ENCODE measurements at regions of chr2 and their contacts with region 1.

Region 1: GRCh38 chr2:96856776-96857673 is 791 bp downstream of the ANKRD39 start:
- DNase-seq: peak in 2 of 5 donors; percentile 18 to 38
- H3K4me3 ChIP-seq: peak overlapping the region; percentile 92
- H3K4me3 Mint-ChIP-seq: peak overlapping the region; percentile 79 to 94 (median 92)
- H3K27ac ChIP-seq: peak overlapping the region; percentile 58
- H3K27ac Mint-ChIP-seq: peak overlapping the region; percentile 8 to 92 (median 87)
- H3K4me1 ChIP-seq: peaks cover 32% of the 10 kb centered on the region
- H3K4me1 Mint-ChIP-seq: peaks cover 27 to 61% (median 51%) of the 10 kb centered on the region in 3 donors
- H3K27me3 ChIP-seq: no peaks in the 10 kb centered on the region
- H3K27me3 Mint-ChIP-seq: no peaks in the 10 kb centered on the region

Region 2: DNA sequence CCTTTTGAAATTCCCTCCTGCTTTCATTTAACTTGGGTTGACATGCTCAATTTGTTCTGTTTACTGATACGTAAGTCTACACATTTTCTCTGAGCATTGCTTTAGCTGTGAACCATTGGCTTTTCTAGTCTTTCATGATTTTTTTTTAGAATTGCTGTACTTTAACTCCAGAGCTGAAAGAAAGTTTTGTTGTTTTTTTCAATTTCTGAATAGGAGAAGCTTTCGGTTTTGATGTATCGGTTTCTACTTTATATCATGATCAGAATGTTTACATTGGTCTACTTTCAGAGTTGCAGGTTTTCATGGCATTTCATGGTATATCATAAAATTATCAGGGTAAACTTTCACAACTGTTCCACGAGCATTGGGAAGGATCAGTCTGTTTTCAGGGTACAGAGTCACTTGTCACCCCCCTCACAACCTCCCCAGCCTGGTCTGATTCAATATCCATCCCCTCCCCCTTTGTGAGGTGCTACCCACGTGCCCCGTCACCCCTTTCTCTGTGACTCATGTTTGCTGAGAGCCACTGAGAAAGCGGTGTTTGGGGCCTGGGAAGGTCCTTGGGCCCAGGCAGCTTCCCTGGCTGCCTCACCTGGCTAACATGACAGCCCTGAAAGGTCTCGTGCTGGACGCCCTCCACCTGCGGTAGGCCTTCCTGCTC is 725.7 kb before region 1 on chr2:
- CTCF ChIA-PET with region 1: no interaction called
- POLR2A ChIA-PET with region 1: no interaction called
- DNase-seq: peak in 2 of 5 donors; percentile 40 to 66
- H3K4me3 ChIP-seq: no peak overlapping the region
- H3K4me3 Mint-ChIP-seq: peak overlapping the region in 4 of 7 donors; percentile 6 to 64 (median 43)
- H3K27ac ChIP-seq: no peak overlapping the region
- H3K27ac Mint-ChIP-seq: peak overlapping the region; percentile 62 to 93 (median 76)
- H3K4me1 ChIP-seq: no peaks in the 10 kb centered on the region
- H3K4me1 Mint-ChIP-seq: peaks cover 16 to 52% (median 22%) of the 10 kb centered on the region in 3 donors
- H3K27me3 ChIP-seq: no peaks in the 10 kb centered on the region
- H3K27me3 Mint-ChIP-seq: peaks cover 0 to 3% of the 10 kb centered on the region in 2 donors

Region 3: DNA sequence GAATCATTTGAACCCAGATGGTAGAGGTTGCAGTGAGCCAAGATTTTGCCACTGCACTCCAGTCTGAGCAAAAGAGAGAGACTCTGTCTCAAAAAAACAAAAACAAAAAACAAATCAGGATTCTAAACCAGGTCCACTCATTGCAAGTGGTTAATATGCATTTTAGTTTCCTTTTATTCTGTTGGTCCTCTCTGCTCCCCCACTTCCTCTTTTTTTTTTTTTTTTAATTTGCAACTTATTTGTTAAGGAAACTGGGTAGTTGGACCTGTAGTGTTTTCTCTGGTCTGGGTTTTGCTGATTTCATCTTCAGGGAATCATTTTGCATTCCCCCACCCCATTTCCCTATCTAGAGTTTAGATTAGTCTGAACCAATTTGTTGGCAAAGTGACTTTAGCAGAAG is 200.5 kb before region 1 on chr2:
- CTCF ChIA-PET with region 1: no interaction called
- POLR2A ChIA-PET with region 1: no interaction called
- DNase-seq: no peak
- H3K4me3 ChIP-seq: no peak overlapping the region
- H3K4me3 Mint-ChIP-seq: no peak overlapping the region
- H3K27ac ChIP-seq: no peak overlapping the region
- H3K27ac Mint-ChIP-seq: no peak overlapping the region
- H3K4me1 ChIP-seq: no peaks in the 10 kb centered on the region
- H3K4me1 Mint-ChIP-seq: no peaks in the 10 kb centered on the region
- H3K27me3 ChIP-seq: no peaks in the 10 kb centered on the region
- H3K27me3 Mint-ChIP-seq: no peaks in the 10 kb centered on the region

Region 4: GRCh38 chr2:96669665-96670091 is 187.3 kb before region 1 on chr2:
- CTCF ChIA-PET with region 1: no interaction called
- POLR2A ChIA-PET with region 1: no interaction called
- DNase-seq: no peak
- H3K4me3 ChIP-seq: no peak overlapping the region
- H3K4me3 Mint-ChIP-seq: no peak overlapping the region
- H3K27ac ChIP-seq: no peak overlapping the region
- H3K27ac Mint-ChIP-seq: no peak overlapping the region
- H3K4me1 ChIP-seq: no peaks in the 10 kb centered on the region
- H3K4me1 Mint-ChIP-seq: no peaks in the 10 kb centered on the region
- H3K27me3 ChIP-seq: no peaks in the 10 kb centered on the region
- H3K27me3 Mint-ChIP-seq: peaks cover 0 to 4% of the 10 kb centered on the region in 2 donors

Region 5: DNA sequence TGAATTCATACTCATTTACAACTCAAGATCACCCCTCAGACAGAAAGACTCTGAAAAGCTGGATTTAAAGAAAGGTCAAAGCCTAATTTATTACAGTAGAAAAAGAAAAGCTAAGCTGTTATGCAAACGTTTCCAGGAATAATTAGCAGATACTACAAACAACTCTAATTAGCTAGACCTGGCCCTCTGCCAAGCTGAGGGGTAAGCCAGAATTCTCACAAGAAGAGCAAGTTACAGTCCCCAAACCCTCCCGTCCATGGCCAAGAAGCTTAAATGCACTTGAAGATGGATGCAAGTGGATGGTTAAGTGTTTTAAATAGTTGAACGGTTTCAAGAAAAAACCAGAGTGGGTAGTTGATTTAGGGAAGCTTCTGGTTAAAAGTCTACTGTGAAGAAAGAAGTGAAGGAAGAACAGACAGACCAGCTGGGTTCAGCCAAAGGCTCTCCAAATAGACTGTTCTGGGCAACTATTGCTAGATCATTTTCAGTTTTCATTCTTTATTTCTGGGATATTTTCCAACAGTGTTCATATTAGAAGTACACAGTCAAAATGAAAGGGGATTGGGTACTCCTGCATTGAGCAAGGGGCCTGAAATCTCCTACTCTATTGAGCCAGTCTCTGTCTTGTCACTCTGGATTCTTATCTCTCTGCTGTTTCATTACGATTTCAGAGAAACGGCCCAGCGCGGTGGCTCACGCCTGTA is 122.0 kb before region 1 on chr2:
- CTCF ChIA-PET with region 1: no interaction called
- POLR2A ChIA-PET with region 1: no interaction called
- DNase-seq: no peak
- H3K4me3 ChIP-seq: no peak overlapping the region
- H3K4me3 Mint-ChIP-seq: peak overlapping the region in 1 of 7 donors; percentile 36
- H3K27ac ChIP-seq: no peak overlapping the region
- H3K27ac Mint-ChIP-seq: peak overlapping the region in 3 of 8 donors; percentile 16 to 66 (median 27)
- H3K4me1 ChIP-seq: peaks cover 7% of the 10 kb centered on the region
- H3K4me1 Mint-ChIP-seq: peaks cover 23 to 38% (median 30%) of the 10 kb centered on the region in 3 donors
- H3K27me3 ChIP-seq: no peaks in the 10 kb centered on the region
- H3K27me3 Mint-ChIP-seq: no peaks in the 10 kb centered on the region

Region 6: GRCh38 chr2:96773922-96774321 is 83.1 kb before region 1 on chr2:
- CTCF ChIA-PET with region 1: interaction called, 7 read pairs
- POLR2A ChIA-PET with region 1: interaction called, 10 read pairs
- DNase-seq: peak; percentile 38 to 75 (median 63)
- H3K4me3 ChIP-seq: peak overlapping the region; percentile 59
- H3K4me3 Mint-ChIP-seq: peak overlapping the region; percentile 87 to 97 (median 93)
- H3K27ac ChIP-seq: peak overlapping the region; percentile 49
- H3K27ac Mint-ChIP-seq: peak overlapping the region; percentile 83 to 96 (median 94)
- H3K4me1 ChIP-seq: peaks cover 10% of the 10 kb centered on the region
- H3K4me1 Mint-ChIP-seq: peaks cover 25 to 36% (median 34%) of the 10 kb centered on the region in 3 donors
- H3K27me3 ChIP-seq: no peaks in the 10 kb centered on the region
- H3K27me3 Mint-ChIP-seq: peaks cover 0 to 2% of the 10 kb centered on the region in 2 donors

Region 7: GRCh38 chr2:96816128-96816835 is 40.7 kb before region 1 on chr2 and contains the start of gene CNNM3:
- CTCF ChIA-PET with region 1: interaction called, 38 read pairs
- POLR2A ChIA-PET with region 1: interaction called, 8 read pairs
- DNase-seq: peak; percentile 91 to 96 (median 94)
- H3K4me3 ChIP-seq: peak within 1 kb of the TSS; percentile 84
- H3K4me3 Mint-ChIP-seq: peak within 1 kb of the TSS; percentile 92 to 97 (median 96)
- H3K27ac ChIP-seq: peak within 1 kb of the TSS; percentile 69
- H3K27ac Mint-ChIP-seq: peak within 1 kb of the TSS; percentile 56 to 96 (median 94)
- H3K4me1 ChIP-seq: peaks cover 48% of the 10 kb centered on the region
- H3K4me1 Mint-ChIP-seq: peaks cover 60 to 76% (median 68%) of the 10 kb centered on the region in 3 donors
- H3K27me3 ChIP-seq: no peaks in the 10 kb centered on the region
- H3K27me3 Mint-ChIP-seq: peaks cover 0 to 1% of the 10 kb centered on the region in 2 donors
- total RNA-seq, gene CNNM3: 32.6 to 36.6 TPM

Region 8: DNA sequence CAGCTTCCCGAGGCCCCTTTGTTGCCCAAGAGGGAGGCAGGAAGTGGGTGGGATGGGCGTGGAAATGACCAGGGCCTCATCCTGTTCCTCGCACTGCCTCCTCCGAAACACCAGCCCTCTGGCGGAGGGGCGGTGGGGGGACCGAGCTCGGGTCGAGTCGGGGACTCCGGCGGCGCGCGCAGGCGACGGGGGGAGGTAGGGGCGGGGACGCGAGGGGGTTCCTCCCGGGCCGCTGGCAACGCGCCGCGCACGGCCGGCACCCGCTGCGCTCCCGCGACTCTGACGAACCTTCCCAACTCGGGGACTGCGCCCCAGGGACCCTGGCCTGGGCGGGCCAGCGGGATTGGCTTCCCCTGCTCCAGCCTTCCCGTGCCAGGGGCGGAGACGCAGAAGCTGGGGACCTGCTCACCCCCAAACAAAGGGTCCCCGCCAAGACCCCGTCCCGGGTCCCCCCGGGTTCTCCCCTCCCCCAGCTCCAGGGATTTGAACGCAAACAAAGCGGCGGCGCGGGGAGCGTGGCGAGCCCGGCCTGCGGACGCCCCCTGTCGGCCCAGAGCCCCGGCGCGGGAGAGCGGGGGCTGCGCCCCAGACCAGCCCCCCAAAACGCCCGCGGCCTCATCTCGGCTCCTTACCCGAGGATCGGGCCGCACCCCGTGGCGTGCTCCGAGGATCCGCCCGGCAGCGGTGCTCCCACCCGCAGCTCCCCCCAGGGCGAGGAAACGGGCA is 11.7 kb after region 1 on chr2:
- CTCF ChIA-PET with region 1: interaction called, 88 read pairs
- POLR2A ChIA-PET with region 1: interaction called, 11 read pairs
- DNase-seq: peak; percentile 45 to 79 (median 61)
- H3K4me3 ChIP-seq: peak overlapping the region; percentile 63
- H3K4me3 Mint-ChIP-seq: peak overlapping the region; percentile 80 to 95 (median 88)
- H3K27ac ChIP-seq: peak overlapping the region; percentile 77
- H3K27ac Mint-ChIP-seq: peak overlapping the region in 7 of 8 donors; percentile 63 to 98 (median 86)
- H3K4me1 ChIP-seq: peaks cover 27% of the 10 kb centered on the region
- H3K4me1 Mint-ChIP-seq: peaks cover 29 to 57% (median 46%) of the 10 kb centered on the region in 3 donors
- H3K27me3 ChIP-seq: no peaks in the 10 kb centered on the region
- H3K27me3 Mint-ChIP-seq: no peaks in the 10 kb centered on the region

Region 9: DNA sequence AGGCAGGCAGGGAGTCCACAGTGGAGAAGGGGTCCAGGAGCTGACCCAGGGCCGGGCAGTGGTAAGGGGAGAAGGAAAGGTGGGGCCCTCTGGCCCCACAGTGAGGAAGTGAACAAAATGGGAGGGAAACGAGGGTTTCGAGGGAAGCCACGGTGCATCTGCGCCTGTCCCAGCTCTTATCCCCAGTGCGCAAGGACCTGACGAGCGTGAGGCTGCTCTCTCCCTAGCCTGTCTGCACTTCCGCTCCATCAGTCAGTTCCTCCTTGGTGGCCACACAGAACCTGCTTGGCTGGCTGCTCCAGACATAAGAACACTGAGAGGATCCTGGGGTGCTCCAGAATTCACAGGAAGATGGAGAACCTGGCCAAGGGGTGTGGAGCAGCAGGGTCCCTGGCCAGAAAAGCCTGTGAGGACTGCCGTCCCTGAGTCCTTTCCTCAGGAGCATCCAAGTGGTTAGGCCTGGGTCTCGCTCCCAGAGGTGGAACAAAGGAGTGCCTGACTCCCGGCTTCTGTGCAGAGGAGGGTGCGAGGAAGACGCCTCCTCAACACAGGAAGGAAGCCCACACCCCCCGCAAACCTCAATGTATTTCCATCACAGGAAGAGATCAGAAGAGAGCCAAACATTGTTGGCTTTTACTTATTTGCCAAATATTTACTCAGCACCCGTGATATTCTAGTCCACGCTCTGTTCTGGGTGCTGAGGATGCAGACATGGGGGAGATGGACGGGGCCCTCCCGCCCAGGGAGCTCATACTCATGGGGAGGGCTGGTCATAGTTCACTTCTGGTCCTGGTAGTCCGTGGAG is 56.6 kb after region 1 on chr2:
- CTCF ChIA-PET with region 1: interaction called, 14 read pairs
- POLR2A ChIA-PET with region 1: no interaction called
- DNase-seq: peak; percentile 29 to 79 (median 64)
- H3K4me3 ChIP-seq: peak overlapping the region; percentile 71
- H3K4me3 Mint-ChIP-seq: peak overlapping the region; percentile 36 to 99 (median 83)
- H3K27ac ChIP-seq: peak overlapping the region; percentile 57
- H3K27ac Mint-ChIP-seq: peak overlapping the region; percentile 80 to 100 (median 94)
- H3K4me1 ChIP-seq: peaks cover 51% of the 10 kb centered on the region
- H3K4me1 Mint-ChIP-seq: peaks cover 68 to 84% (median 81%) of the 10 kb centered on the region in 3 donors
- H3K27me3 ChIP-seq: no peaks in the 10 kb centered on the region
- H3K27me3 Mint-ChIP-seq: no peaks in the 10 kb centered on the region

Region 10: DNA sequence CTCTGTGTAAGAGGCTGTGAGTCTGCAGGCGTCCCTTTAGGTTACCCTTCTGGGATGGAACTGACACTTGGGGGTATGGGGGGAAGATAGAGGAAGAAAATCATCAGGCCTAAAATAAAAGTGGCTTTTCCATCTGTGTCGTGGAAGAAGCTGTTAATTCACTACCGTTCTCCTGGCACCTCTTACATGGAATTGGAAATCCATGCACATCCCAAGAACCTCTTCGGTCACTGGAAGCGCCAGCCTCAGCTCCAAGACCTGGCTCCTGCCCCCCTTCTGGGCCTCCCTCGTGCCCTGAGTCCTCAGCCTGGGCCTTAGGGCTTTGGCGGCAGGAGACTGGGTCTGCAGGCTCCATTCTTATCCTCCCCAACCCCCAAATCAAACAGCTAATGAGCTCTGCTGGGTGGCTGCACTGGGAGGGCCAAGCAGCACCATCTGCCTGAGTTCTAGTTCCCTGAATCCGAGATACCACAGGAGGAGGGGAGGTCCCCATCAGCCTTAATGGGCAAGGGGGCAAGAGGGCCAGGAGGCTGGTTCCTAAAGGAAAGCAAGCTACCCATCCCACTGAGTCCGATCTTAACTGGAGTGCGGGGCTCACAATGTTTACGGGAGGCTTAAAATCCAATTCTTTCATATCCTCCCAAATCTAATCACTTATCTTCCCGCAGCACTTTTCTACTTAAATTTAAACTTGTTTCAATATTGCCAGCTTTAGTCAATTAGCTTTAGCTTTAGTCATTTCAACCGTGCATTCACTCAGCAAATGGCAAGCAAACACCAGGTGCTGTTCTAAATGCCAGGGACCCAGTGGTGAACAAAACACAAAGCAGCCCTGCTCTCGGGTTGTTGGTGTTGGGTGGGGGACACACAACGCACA is 76.5 kb after region 1 on chr2:
- CTCF ChIA-PET with region 1: interaction called, 14 read pairs
- POLR2A ChIA-PET with region 1: no interaction called
- DNase-seq: peak in 1 of 5 donors; percentile 25
- H3K4me3 ChIP-seq: no peak overlapping the region
- H3K4me3 Mint-ChIP-seq: no peak overlapping the region
- H3K27ac ChIP-seq: no peak overlapping the region
- H3K27ac Mint-ChIP-seq: no peak overlapping the region
- H3K4me1 ChIP-seq: no peaks in the 10 kb centered on the region
- H3K4me1 Mint-ChIP-seq: peaks cover 8 to 9% (median 9%) of the 10 kb centered on the region in 3 donors
- H3K27me3 ChIP-seq: no peaks in the 10 kb centered on the region
- H3K27me3 Mint-ChIP-seq: peaks cover 0 to 2% of the 10 kb centered on the region in 2 donors

Region 11: GRCh38 chr2:96951093-96951654 is 94.1 kb after region 1 on chr2:
- CTCF ChIA-PET with region 1: interaction called, 358 read pairs
- POLR2A ChIA-PET with region 1: interaction called, 27 read pairs
- DNase-seq: peak; percentile 59 to 85 (median 74)
- H3K4me3 ChIP-seq: no peak overlapping the region
- H3K4me3 Mint-ChIP-seq: no peak overlapping the region
- H3K27ac ChIP-seq: no peak overlapping the region
- H3K27ac Mint-ChIP-seq: peak overlapping the region in 5 of 8 donors; percentile 5 to 75 (median 47)
- H3K4me1 ChIP-seq: peaks cover 21% of the 10 kb centered on the region
- H3K4me1 Mint-ChIP-seq: peaks cover 17 to 23% (median 21%) of the 10 kb centered on the region in 3 donors
- H3K27me3 ChIP-seq: no peaks in the 10 kb centered on the region
- H3K27me3 Mint-ChIP-seq: no peaks in the 10 kb centered on the region

Measured in CD8-positive, alpha-beta memory T cell (primary cell).